Aorta (tissue), 5 donors: ENCODE measurements at regions of chr11 and their contacts with region 1.

Region 1: GRCh38 chr11:36376888-36377758 is 81.0 kb downstream of the PRR5L start:
- DNase-seq: peak; percentile 81 to 84
- ATAC-seq: peak; percentile 83
- H3K4me3 ChIP-seq: peak overlapping the region; percentile 30 to 61
- H3K27ac ChIP-seq: no peak overlapping the region
- H3K4me1 ChIP-seq: peaks cover 0 to 4% of the 10 kb centered on the region in 2 donors
- H3K27me3 ChIP-seq: no peaks in the 10 kb centered on the region

Region 2: DNA sequence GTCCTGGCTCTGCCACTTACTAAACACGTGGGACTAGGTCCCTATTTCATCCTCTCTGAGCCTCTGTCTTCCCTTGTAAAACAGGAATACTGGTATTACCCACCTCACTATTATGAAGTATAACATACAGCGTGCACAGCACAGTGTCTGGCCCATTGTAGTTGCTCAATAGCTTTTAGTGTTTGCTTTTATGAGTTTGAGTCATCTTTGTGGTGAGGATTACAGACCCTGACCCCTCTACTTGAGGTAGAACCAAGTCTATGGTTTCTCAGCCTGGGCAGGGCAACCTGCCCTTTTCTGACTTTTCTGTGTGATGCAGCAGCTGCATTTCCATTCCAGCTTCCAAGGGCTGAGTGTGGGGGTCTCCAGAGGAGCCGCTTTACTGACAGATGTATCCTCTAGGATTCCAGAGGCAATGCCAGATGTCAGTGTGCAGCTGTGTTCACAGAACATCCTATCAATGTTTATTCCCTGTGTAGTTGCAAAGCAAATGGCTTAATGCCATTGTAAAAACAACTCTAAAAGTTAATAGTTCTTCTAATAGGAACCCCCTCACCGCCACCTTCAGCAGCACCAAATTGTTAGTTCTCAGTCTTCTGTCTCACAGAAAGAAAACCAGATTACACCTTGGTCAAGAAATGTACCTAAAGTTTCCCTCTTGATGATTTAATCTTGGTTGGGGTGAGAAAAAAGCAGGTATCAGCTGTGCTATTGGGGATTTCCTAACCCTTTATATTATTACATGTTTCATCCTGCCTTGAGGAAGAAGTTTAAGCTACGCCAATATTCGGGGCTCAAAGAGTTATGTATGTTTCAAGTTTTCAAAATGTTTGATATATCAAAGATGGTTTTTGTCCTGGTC is 64.3 kb before region 1 on chr11:
- intact Hi-C with region 1: no loop called
- DNase-seq: no peak
- ATAC-seq: no peak
- H3K4me3 ChIP-seq: no peak overlapping the region
- H3K27ac ChIP-seq: no peak overlapping the region
- H3K4me1 ChIP-seq: peaks cover 0 to 4% of the 10 kb centered on the region in 2 donors
- H3K27me3 ChIP-seq: no peaks in the 10 kb centered on the region

Region 3: GRCh38 chr11:36455658-36456111 is 78.6 kb after region 1 on chr11:
- intact Hi-C with region 1: loop called in 1 of 2 experiments (anchors 5 kb)
- DNase-seq: peak; percentile 94 to 95
- ATAC-seq: peak; percentile 93
- H3K4me3 ChIP-seq: no peak overlapping the region
- H3K27ac ChIP-seq: peak overlapping the region; percentile 78 to 99
- H3K4me1 ChIP-seq: peaks cover 0 to 2% of the 10 kb centered on the region in 2 donors
- H3K27me3 ChIP-seq: no peaks in the 10 kb centered on the region